GM10248 (cell line): ENCODE measurements at regions of chr14 and their contacts with region 1.

Region 1: GRCh38 chr14:71011479-71011878 is 104.2 kb downstream of the PCNX1 start:
- DNase-seq: no peak
- CTCF ChIP-seq: no peak

Region 2: GRCh38 chr14:70962935-70963334 is 48.5 kb before region 1 on chr14:
- CTCF ChIA-PET with region 1: no interaction called
- POLR2A ChIA-PET with region 1: no interaction called
- DNase-seq: no peak
- CTCF ChIP-seq: no peak

Region 3: GRCh38 chr14:70995676-70996075 is 15.8 kb before region 1 on chr14:
- CTCF ChIA-PET with region 1: no interaction called
- POLR2A ChIA-PET with region 1: no interaction called
- DNase-seq: no peak
- CTCF ChIP-seq: no peak

Region 4: GRCh38 chr14:71021347-71022014 is 10.0 kb after region 1 on chr14:
- CTCF ChIA-PET with region 1: interaction called, 4 read pairs
- POLR2A ChIA-PET with region 1: interaction called, 11 read pairs
- DNase-seq: no peak
- CTCF ChIP-seq: no peak